ENCODE measurements at regions of chr5 and their contacts with region 1.

Region 1: GRCh38 chr5:150517272-150518152 is 9.6 kb downstream of the NDST1 start:
- DNase-seq: peak in 2 of 3 donors; percentile 12 to 24
- H3K4me3 ChIP-seq: no peak overlapping the region
- H3K27ac ChIP-seq: no peak overlapping the region
- H3K4me1 ChIP-seq: peaks cover 0 to 19% (median 11%) of the 10 kb centered on the region in 4 experiments
- H3K27me3 ChIP-seq: no peaks in the 10 kb centered on the region

Region 2: GRCh38 chr5:150497274-150497988 is 20.1 kb before region 1 on chr5:
- CTCF ChIA-PET with region 1: interaction called, 15 read pairs
- POLR2A ChIA-PET with region 1: no interaction called
- DNase-seq: no peak
- H3K4me3 ChIP-seq: no peak overlapping the region
- H3K27ac ChIP-seq: no peak overlapping the region
- H3K4me1 ChIP-seq: peaks cover 0 to 7% (median 2%) of the 10 kb centered on the region in 4 experiments
- H3K27me3 ChIP-seq: no peaks in the 10 kb centered on the region

Region 3: GRCh38 chr5:150809363-150809762 is 291.9 kb after region 1 on chr5:
- CTCF ChIA-PET with region 1: no interaction called
- POLR2A ChIA-PET with region 1: no interaction called
- DNase-seq: no peak
- H3K4me3 ChIP-seq: no peak overlapping the region
- H3K27ac ChIP-seq: no peak overlapping the region
- H3K4me1 ChIP-seq: no peaks in the 10 kb centered on the region
- H3K27me3 ChIP-seq: no peaks in the 10 kb centered on the region

Measured in common myeloid progenitor, CD34-positive (primary cell).